Panc1 (cell line): ENCODE measurements at regions of chr21 and their contacts with region 1.

Region 1: DNA sequence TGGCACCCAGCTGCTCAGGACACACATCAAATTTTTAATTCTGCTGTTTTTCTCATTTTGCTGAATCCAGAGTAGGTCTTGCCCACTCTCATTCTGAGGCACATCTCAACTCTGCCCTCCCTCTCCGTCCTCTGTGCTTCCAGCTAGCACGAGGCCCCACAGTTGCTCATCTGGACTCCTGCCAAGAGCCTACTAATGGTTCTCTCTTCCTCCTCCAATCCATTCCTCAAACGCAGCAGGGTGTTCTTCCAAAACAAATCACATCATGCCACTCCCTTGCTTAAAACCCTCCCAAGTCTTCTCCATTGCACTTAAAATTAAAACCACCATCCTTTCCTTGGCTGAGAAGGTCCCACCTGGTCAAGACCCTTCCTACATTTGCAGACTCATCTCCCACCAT is 49.8 kb upstream of the SCAF4 start:
- DNase-seq: no peak
- ATAC-seq: no peak
- H3K4me3 ChIP-seq: no peak overlapping the region
- H3K27ac ChIP-seq: no peak overlapping the region
- H3K4me1 ChIP-seq: no peaks in the 10 kb centered on the region
- H3K27me3 ChIP-seq: no peaks in the 10 kb centered on the region
- CTCF ChIP-seq: no peak

Region 2: DNA sequence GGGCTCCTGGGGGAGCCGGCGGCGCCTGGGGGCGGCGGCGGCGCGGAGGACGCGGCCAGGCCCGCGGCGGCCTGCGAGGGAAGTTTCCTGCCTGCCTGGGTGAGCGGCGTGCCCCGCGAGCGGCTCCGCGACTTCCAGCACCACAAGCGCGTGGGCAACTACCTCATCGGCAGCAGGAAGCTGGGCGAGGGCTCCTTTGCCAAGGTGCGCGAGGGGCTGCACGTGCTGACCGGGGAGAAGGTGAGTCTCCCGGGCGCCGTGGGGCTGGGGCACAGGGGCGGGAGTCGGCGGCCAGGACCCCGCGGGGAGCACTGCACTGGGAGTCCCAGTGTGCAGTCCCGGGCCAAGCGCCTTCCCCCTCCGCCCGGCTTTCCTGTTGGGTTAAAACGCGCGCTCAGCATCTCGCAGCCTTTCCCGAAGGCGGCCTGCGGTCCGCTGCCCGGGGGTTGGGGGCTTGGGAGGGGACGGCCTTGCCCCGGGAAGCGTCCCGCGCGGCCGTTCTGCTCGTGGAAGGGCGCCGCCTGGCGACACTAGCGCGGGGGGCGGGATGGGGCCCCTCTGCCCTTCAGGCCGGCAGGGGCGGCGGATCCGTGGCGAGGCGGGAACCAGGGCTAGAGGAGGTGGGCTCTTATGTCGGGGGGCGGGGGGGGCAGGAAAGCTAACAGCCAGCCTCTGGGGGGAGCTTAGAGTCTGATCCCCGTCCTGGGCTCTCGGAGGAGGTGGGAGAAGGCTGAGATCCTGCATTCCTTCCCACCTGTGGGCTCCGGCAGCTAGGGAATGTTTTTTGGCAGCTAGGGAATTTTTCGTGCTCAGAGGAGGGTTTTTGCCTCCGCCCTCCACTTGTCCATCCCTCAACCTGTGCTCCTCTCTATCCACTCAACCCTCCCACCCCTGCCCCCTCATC is 92.2 kb after region 1 on chr21:
- CTCF ChIA-PET with region 1: no interaction called
- POLR2A ChIA-PET with region 1: no interaction called
- in situ Hi-C with region 1: no loop called
- intact Hi-C with region 1: loop called (anchors 10 kb)
- DNase-seq: no peak
- ATAC-seq: peak; percentile 75
- H3K4me3 ChIP-seq: peak overlapping the region; percentile 24 to 34
- H3K27ac ChIP-seq: no peak overlapping the region
- H3K4me1 ChIP-seq: no peaks in the 10 kb centered on the region
- H3K27me3 ChIP-seq: peaks cover 6% of the 10 kb centered on the region
- CTCF ChIP-seq: peak; percentile 81